ENCODE measurements at regions of chr17 and their contacts with region 1.

Region 1: DNA sequence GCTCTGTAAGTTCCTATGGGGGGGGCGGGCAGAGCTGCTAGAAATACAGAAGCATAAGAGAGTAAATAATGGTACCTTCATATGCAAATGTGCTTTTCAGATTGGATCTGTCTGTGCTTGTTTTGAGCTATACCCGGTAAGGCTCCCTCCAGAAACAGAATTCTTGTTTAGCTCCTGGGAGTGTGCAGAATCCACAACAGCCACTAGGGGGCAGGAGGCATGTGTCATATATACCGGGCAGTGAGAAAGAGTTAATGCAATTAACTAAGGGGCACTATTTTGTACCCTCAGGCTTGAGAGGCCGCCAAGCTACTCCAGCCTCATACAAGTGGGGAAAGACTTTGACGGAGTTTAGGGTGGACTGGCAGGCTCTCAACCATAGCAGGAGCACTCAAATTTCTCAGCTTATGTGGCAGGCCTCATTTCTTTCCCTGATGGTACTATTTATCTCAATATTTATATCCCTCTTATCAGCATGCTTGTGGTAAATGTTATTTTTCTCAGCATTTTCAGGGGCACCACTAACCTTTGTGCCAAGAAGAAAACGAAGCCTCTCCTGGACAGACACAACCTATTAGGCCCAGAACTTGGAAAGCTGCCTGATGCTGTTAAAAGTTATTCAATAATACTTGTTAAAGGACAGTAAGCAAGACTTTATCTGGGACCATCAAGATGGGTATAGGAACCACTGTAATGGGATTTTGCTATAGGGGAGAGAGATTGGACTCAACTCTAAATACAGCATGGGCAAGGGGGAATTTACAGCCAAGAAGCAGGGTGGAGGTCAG is 10.7 kb upstream of the CENPV start:
- DNase-seq: peak in 1 of 2 experiments; percentile 88
- H3K4me3 ChIP-seq: no peak overlapping the region
- H3K27ac ChIP-seq: no peak overlapping the region
- H3K4me1 ChIP-seq: peaks cover 0 to 2% (median 0%) of the 10 kb centered on the region in 4 experiments; a peak in 1 of 7 replicates
- H3K27me3 ChIP-seq: no peaks in the 10 kb centered on the region
- CTCF ChIP-seq: peak; percentile 62 to 93 (median 91)
- EP300 ChIP-seq: no peak
- POLR2A ChIP-seq: no peak
- RAD21 ChIP-seq: peak; percentile 86 to 88

Region 2: GRCh38 chr17:16325964-16326363 is 38.0 kb before region 1 on chr17:
- CTCF ChIA-PET with region 1: interaction called, 10 read pairs
- POLR2A ChIA-PET with region 1: no interaction called
- DNase-seq: no peak
- H3K4me3 ChIP-seq: no peak overlapping the region
- H3K27ac ChIP-seq: no peak overlapping the region
- H3K4me1 ChIP-seq: no peaks in the 10 kb centered on the region; a peak in 1 of 7 replicates
- H3K27me3 ChIP-seq: no peaks in the 10 kb centered on the region
- CTCF ChIP-seq: no peak
- EP300 ChIP-seq: no peak
- POLR2A ChIP-seq: no peak
- RAD21 ChIP-seq: no peak

Region 3: DNA sequence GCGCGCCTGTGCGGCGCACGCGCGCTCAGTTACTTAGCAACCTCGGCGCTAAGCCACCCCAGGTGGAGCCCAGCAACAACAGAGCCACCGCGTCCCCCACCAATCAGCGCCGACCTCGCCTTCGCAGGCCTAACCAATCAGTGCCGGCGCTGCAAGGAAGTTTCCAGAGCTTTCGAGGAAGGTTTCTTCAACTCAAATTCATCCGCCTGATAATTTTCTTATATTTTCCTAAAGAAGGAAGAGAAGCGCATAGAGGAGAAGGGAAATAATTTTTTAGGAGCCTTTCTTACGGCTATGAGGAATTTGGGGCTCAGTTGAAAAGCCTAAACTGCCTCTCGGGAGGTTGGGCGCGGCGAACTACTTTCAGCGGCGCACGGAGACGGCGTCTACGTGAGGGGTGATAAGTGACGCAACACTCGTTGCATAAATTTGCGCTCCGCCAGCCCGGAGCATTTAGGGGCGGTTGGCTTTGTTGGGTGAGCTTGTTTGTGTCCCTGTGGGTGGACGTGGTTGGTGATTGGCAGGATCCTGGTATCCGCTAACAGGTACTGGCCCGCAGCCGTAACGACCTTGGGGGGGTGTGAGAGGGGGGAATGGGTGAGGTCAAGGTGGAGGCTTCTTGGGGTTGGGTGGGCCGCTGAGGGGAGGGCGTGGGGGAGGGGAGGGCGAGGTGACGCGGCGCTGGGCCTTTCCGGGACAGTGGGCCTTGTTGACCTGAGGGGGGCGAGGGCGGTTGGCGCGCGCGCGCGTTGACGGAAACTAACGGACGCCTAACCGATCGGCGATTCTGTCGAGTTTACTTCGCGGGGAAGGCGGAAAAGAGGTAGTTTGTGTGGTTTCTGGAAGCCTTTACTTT is 16.9 kb after region 1 on chr17 and contains the start of gene UBB:
- CTCF ChIA-PET with region 1: interaction called, 51 read pairs
- POLR2A ChIA-PET with region 1: interaction called, 12 read pairs
- DNase-seq: peak; percentile 93 to 98
- H3K4me3 ChIP-seq: peak within 1 kb of the TSS; percentile 85 to 95 (median 92)
- H3K27ac ChIP-seq: peak within 1 kb of the TSS; percentile 97
- H3K4me1 ChIP-seq: peaks cover 0 to 2% (median 0%) of the 10 kb centered on the region in 4 experiments; a peak in 4 of 7 replicates
- H3K27me3 ChIP-seq: no peaks in the 10 kb centered on the region
- CTCF ChIP-seq: peak in 1 of 3 experiments; percentile 14; a peak in 1 of 4 replicates
- EP300 ChIP-seq: peak; percentile 19 to 22; a peak in 2 of 3 replicates
- POLR2A ChIP-seq: peak; percentile 96 to 99
- RAD21 ChIP-seq: no peak; a peak in 1 of 4 replicates
- total RNA-seq, gene UBB: 1,585 and 1,597 TPM in 2 replicates

Region 4: GRCh38 chr17:16415031-16415924 is 51.3 kb after region 1 on chr17 and contains the start of gene TRPV2:
- CTCF ChIA-PET with region 1: interaction called, 50 read pairs
- POLR2A ChIA-PET with region 1: no interaction called
- DNase-seq: peak in 1 of 2 experiments; percentile 73
- H3K4me3 ChIP-seq: no peak within 1 kb of the TSS
- H3K27ac ChIP-seq: no peak within 1 kb of the TSS
- H3K4me1 ChIP-seq: peaks cover 0 to 12% (median 5%) of the 10 kb centered on the region in 4 experiments; a peak in 6 of 7 replicates
- H3K27me3 ChIP-seq: no peaks in the 10 kb centered on the region
- CTCF ChIP-seq: peak; percentile 81 to 84 (median 82)
- EP300 ChIP-seq: no peak
- POLR2A ChIP-seq: no peak
- RAD21 ChIP-seq: peak; percentile 68 to 75
- total RNA-seq, gene TRPV2: 1.6 and 2.1 TPM in 2 replicates

Region 5: GRCh38 chr17:16444258-16444886 is 80.4 kb after region 1 on chr17:
- CTCF ChIA-PET with region 1: interaction called, 10 read pairs
- POLR2A ChIA-PET with region 1: interaction called, 14 read pairs
- DNase-seq: no peak
- H3K4me3 ChIP-seq: no peak overlapping the region
- H3K27ac ChIP-seq: no peak overlapping the region
- H3K4me1 ChIP-seq: peaks cover 0 to 15% (median 7%) of the 10 kb centered on the region in 4 experiments; a peak in 5 of 7 replicates
- H3K27me3 ChIP-seq: no peaks in the 10 kb centered on the region
- CTCF ChIP-seq: no peak
- EP300 ChIP-seq: no peak
- POLR2A ChIP-seq: peak; percentile 47 to 82; a peak in 2 of 3 replicates
- RAD21 ChIP-seq: no peak

Region 6: GRCh38 chr17:16521070-16521727 is 157.3 kb after region 1 on chr17:
- CTCF ChIA-PET with region 1: interaction called, 13 read pairs
- POLR2A ChIA-PET with region 1: no interaction called
- DNase-seq: peak; percentile 39 to 69
- H3K4me3 ChIP-seq: no peak overlapping the region
- H3K27ac ChIP-seq: no peak overlapping the region
- H3K4me1 ChIP-seq: peaks cover 0 to 3% (median 0%) of the 10 kb centered on the region in 4 experiments; a peak in 3 of 7 replicates
- H3K27me3 ChIP-seq: peaks cover 0 to 2% (median 0%) of the 10 kb centered on the region in 4 experiments; a peak in 2 of 7 replicates
- CTCF ChIP-seq: peak; percentile 78 to 97 (median 93)
- EP300 ChIP-seq: no peak
- POLR2A ChIP-seq: no peak
- RAD21 ChIP-seq: peak; percentile 97